PC-9 (cell line): ENCODE measurements at regions of chr12 and their contacts with region 1.

Region 1: GRCh38 chr12:116887897-116888296 is 6.7 kb upstream of the HRK start:
- DNase-seq: no peak
- H3K4me3 ChIP-seq: no peak overlapping the region
- H3K27ac ChIP-seq: no peak overlapping the region
- H3K4me1 ChIP-seq: 0 out of 2 replicates have a peak, but pooled peaks cover 3% of the 10 kb centered on the region
- H3K27me3 ChIP-seq: no peaks in the 10 kb centered on the region
- CTCF ChIP-seq: no peak

Region 2: DNA sequence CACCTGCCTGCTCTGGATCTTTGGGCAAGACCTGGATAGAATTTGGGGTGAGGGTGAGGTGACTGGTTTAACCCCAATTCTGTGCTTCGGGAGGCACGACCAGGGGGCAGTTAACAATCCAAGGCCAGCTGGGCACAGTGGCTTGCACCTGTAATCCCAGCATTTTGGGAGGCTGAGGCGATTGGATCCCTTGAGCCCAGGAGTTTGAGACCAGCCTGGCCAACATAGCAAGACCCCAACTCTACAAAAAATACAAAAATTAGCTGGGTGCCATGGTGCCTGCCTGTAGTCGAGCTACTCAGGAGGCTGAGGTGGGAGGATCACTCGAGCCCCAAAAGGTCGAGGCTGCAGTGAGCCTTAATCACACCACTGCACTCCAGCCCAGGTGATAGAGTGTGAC is 44.8 kb before region 1 on chr12:
- CTCF ChIA-PET with region 1: interaction called, 16 read pairs
- POLR2A ChIA-PET with region 1: no interaction called
- intact Hi-C with region 1: no loop called
- DNase-seq: no peak
- H3K4me3 ChIP-seq: no peak overlapping the region
- H3K27ac ChIP-seq: no peak overlapping the region
- H3K4me1 ChIP-seq: no peaks in the 10 kb centered on the region
- H3K27me3 ChIP-seq: no peaks in the 10 kb centered on the region
- CTCF ChIP-seq: no peak

Region 3: DNA sequence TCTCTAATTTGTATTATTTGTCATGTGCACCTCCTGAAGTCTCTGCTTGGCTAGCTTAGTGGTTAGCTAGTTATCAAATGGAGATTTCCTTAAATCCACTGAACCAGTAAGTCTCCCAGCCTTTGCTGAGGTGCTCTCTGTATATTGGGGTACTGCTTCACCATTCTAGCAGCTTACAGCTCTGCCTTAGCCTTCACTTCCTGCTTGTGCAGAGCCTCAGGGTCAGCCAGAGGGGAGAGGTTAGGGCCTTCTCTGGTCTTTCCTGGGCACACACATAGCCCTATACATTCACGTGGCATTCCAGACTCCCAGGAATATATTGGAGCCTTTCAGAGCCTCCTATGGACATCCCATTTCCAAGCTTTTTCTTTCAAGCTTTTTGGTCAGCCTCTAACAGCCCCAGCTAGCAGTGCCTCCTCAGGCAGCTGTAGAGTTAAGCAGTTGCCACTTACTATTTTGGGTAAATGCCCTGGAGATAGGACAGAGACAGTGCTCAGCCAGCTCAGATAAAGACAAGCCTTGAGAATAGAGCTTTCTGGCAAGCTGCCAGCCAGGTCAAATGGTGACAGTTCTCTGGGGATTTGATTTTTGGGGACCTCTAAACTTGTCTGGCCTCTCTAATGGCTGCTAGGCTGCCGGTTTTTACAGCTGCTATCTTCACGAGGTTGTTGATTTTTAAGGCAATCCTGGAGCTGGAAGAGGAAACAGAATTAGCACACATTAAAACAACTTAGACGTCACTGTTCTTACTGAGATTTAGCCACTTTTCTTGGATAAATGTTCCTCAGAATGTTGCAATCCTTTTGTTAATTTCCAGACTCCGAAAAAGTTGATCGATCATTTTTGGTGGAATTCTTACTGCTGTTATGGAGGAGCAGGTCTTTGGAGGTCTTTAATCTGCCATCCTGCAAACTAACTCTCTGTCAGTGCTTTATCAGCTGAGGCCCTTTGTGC is 55.8 kb after region 1 on chr12:
- CTCF ChIA-PET with region 1: no interaction called
- POLR2A ChIA-PET with region 1: no interaction called
- intact Hi-C with region 1: no loop called
- DNase-seq: no peak
- H3K4me3 ChIP-seq: no peak overlapping the region
- H3K27ac ChIP-seq: no peak overlapping the region
- H3K4me1 ChIP-seq: no peaks in the 10 kb centered on the region
- H3K27me3 ChIP-seq: no peaks in the 10 kb centered on the region
- CTCF ChIP-seq: no peak